A549 (cell line): ENCODE measurements at regions of chr1 and their contacts with region 1.

Region 1: GRCh38 chr1:156282479-156283222 is at the start of gene SMG5:
- DNase-seq: peak; percentile 92 to 98
- ATAC-seq: peak; percentile 89 to 97
- H3K4me3 ChIP-seq: peak within 1 kb of the TSS; percentile 83
- H3K27ac ChIP-seq: peak within 1 kb of the TSS; percentile 90 to 95
- H3K4me1 ChIP-seq: peaks cover 21% of the 10 kb centered on the region
- CTCF ChIP-seq: no peak
- EP300 ChIP-seq: no peak
- POLR2A ChIP-seq: peak; percentile 93
- RAD21 ChIP-seq: no peak
- polyA plus RNA-seq, gene SMG5: 25.6 and 38.0 TPM in 2 replicates

Region 2: GRCh38 chr1:156295391-156295947 is 12.8 kb after region 1 on chr1 and contains the start of gene GLMP:
- CTCF ChIA-PET with region 1: interaction called, 7 read pairs
- POLR2A ChIA-PET with region 1: interaction called, 16 read pairs
- DNase-seq: peak; percentile 64 to 66
- ATAC-seq: peak; percentile 62 to 68
- H3K4me3 ChIP-seq: peak within 1 kb of the TSS; percentile 71
- H3K27ac ChIP-seq: peak within 1 kb of the TSS; percentile 80 to 89
- H3K4me1 ChIP-seq: peaks cover 4% of the 10 kb centered on the region; the same call in 2 of the 3 replicates
- CTCF ChIP-seq: no peak
- EP300 ChIP-seq: no peak
- POLR2A ChIP-seq: peak; percentile 62
- RAD21 ChIP-seq: no peak
- polyA plus RNA-seq, gene GLMP: 12.4 and 16.9 TPM in 2 replicates

Region 3: DNA sequence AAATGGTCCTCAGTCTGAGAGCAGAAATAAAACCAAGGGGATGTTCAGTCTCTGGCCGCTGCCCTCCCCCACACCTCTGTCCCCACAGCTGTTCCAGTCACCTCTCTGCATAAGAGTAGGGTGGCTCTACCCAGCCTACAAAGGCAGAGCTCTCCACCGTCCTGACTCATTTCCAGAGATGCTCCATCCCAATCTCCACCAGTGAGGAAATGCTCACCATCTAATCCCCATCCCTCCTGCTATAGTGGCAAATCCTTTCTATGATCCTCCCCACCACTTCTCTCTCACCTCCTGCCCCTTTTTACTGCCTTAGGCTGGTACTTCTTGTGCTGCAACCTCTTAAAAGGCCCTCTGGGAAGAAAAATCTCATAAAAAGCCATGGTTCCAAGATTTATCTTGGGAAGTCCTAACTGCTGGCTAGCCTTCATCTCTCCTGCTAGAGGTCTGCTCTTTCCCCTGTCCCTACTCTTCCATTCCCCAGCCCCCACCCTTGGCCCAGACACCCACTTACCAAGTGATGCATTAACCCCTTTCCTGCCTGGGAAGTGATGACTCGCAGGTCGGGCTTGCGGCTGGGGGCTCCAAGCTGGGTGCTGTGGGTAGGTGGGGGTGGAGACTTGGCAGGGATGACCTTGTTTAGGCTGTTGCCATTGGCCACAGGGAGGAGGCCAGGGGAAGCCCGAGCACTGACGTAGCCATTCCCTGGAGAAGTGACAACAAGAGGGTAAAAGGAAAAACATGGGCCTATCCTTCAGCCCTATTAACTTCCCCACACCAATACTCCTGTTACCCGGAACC is 194.0 kb after region 1 on chr1:
- CTCF ChIA-PET with region 1: no interaction called
- POLR2A ChIA-PET with region 1: no interaction called
- DNase-seq: peak; percentile 31 to 61
- ATAC-seq: peak in 1 of 2 experiments; percentile 41; a peak in 3 of 6 replicates
- H3K4me3 ChIP-seq: no peak overlapping the region
- H3K27ac ChIP-seq: peak overlapping the region in 1 of 2 experiments; percentile 61; a peak in 2 of 6 replicates
- H3K4me1 ChIP-seq: peaks cover 37% of the 10 kb centered on the region
- CTCF ChIP-seq: no peak
- EP300 ChIP-seq: no peak
- POLR2A ChIP-seq: no peak
- RAD21 ChIP-seq: no peak